Activated CD8-positive, alpha-beta memory T cell treated with anti-CD3 and anti-CD28 coated beads, Interleukin-2, amount 10 ng/mL, durations not matched to agents 7 days and 5 days (primary cell): ENCODE measurements at regions of chr18 and their contacts with region 1.

Region 1: DNA sequence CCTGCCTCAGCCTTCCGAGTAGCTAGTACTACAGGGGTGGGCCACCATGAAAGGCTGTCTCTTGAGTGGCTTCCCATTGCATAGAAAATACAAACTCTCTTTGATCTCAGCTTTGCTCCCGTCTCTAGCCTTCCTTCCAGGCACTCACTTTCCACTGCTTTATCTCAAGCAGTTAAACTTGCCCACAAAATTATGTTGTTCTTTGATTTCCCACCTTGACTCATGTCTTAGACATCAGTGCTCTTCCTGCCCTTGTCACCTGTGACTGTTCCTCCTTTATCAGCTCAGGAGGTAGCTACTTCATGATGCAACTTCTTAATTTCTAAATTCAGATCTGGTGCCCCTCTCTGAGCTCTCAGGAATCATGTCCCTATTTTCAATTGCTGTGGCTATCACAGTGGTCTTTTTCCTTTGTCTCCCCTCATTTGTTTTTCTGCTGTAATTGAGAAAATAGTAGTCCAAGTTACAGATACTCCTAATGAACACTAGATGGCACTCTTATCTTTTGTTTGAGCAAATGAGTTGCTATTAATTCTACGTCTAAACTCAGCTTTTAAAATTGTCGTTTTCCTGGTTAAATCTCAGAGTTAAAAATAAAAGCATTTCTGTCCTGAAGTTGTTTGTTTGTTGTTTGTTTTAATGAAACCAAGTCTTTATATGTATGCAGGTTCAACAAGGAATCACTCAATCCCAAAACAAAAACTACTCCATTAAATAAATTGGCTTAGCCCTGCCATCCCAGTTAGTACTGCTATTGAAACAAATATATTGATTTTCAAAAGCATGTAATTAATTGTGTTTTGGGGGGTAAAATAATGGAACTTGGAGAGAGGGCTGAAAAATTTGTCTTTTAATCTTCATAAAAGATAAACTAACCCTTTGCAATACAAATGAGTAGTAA is 46.9 kb upstream of the GREB1L start:
- DNase-seq: no peak
- ATAC-seq: no peak
- H3K4me3 Mint-ChIP-seq: no peak overlapping the region
- H3K27ac Mint-ChIP-seq: no peak overlapping the region
- H3K4me1 Mint-ChIP-seq: no peaks in the 10 kb centered on the region
- H3K27me3 Mint-ChIP-seq: peaks cover 20% of the 10 kb centered on the region

Region 2: GRCh38 chr18:21230436-21230835 is 35.3 kb after region 1 on chr18:
- CTCF ChIA-PET with region 1: no interaction called
- DNase-seq: no peak
- ATAC-seq: no peak
- H3K4me3 Mint-ChIP-seq: no peak overlapping the region
- H3K27ac Mint-ChIP-seq: no peak overlapping the region
- H3K4me1 Mint-ChIP-seq: no peaks in the 10 kb centered on the region
- H3K27me3 Mint-ChIP-seq: no peaks in the 10 kb centered on the region

Region 3: DNA sequence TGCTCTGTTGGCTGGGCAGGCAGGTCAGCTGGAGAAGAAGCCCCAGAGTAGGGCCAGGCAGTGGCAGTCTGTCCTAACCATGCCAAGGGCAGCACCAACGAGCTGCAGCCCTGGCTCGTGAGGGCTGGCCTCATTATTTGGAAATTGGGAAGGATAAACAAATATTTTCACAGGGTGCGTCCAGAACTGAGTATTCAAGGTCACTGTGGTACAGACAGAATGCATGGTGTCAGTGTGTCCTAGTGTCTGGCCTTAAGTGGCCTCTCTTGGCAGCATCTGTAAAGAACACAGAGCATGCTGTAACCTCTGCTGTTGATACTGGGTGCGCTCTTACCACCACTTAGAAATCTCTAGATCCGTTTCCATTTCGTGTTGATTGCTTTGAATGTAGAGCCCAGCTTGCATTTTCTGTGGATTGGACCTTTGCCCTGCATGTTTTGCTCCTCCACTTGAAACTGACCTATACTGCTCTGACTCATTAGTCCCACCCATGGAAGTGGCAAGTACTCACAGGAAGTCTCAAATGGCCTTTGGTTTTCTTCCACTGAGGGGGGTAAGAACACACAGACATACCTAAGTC is 135.1 kb after region 1 on chr18:
- CTCF ChIA-PET with region 1: no interaction called
- DNase-seq: no peak
- ATAC-seq: no peak
- H3K4me3 Mint-ChIP-seq: no peak overlapping the region
- H3K27ac Mint-ChIP-seq: no peak overlapping the region
- H3K4me1 Mint-ChIP-seq: no peaks in the 10 kb centered on the region
- H3K27me3 Mint-ChIP-seq: peaks cover 5% of the 10 kb centered on the region

Region 4: GRCh38 chr18:21444465-21445023 is 249.4 kb after region 1 on chr18:
- CTCF ChIA-PET with region 1: interaction called, 11 read pairs
- DNase-seq: no peak
- ATAC-seq: no peak
- H3K4me3 Mint-ChIP-seq: no peak overlapping the region
- H3K27ac Mint-ChIP-seq: no peak overlapping the region
- H3K4me1 Mint-ChIP-seq: no peaks in the 10 kb centered on the region
- H3K27me3 Mint-ChIP-seq: peaks cover 28% of the 10 kb centered on the region